ENCODE measurements at regions of chr6 and their contacts with region 1.

Region 1: GRCh38 chr6:33132081-33132524 is 56.3 kb downstream of the HLA-DPB1 start:
- DNase-seq: no peak
- H3K4me3 ChIP-seq: no peak overlapping the region
- CTCF ChIP-seq: no peak
- POLR2A ChIP-seq: no peak

Region 2: DNA sequence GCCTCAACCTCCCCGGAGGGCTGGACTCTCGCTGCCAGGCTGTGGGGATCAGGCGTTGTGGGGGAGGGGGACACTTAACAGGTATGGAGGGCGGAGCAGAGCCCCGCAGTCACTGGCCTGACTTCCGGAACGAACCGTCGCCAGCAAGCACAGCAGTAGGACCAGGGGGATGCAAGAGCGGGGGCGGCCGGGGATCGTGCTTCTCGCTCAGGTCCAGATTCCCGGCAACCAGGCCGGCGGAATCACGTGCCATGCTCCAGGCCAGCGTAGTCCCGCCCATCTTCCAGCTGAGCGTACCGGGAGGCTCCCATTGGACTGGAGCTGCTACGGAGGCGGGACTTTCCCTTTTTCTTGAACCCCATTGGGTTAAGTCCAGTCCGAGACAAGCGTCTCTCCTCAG is 1951.6 kb before region 1 on chr6:
- intact Hi-C with region 1: loop called (anchors 5 kb)
- DNase-seq: no peak
- H3K4me3 ChIP-seq: no peak overlapping the region
- CTCF ChIP-seq: no peak
- POLR2A ChIP-seq: no peak

Region 3: GRCh38 chr6:32355018-32355417 is 777.1 kb before region 1 on chr6:
- intact Hi-C with region 1: no loop called
- DNase-seq: no peak
- H3K4me3 ChIP-seq: no peak overlapping the region
- CTCF ChIP-seq: no peak
- POLR2A ChIP-seq: no peak

Region 4: DNA sequence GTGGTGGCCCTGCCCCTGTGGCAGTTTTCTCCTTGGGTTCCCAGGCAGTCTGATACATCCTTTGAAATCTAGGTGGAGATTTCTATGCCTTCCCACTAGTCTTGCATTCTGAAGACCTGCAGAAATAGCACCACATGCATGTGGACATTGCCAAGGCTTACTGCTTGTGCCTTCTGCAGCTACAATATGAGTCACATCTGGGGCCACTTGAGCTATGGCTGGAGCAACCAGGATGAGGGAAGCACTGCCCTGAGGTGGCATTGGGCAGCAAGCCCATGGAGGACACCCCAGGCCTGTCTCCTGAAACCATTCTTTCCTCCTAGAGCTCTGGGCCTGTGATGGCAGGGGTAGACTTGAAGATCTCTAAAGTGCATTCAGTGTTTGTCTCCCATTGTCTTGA is 353.1 kb before region 1 on chr6:
- intact Hi-C with region 1: no loop called
- DNase-seq: no peak
- H3K4me3 ChIP-seq: no peak overlapping the region
- CTCF ChIP-seq: no peak
- POLR2A ChIP-seq: no peak